ENCODE measurements at regions of chr20 and their contacts with region 1.

Region 1: GRCh38 chr20:7171911-7172310 is 404.4 kb downstream of the BMP2 start:
- DNase-seq: peak; percentile 23
- H3K4me3 Mint-ChIP-seq: no peak overlapping the region
- H3K27ac Mint-ChIP-seq: peak overlapping the region; percentile 11
- H3K4me1 Mint-ChIP-seq: peaks cover 7% of the 10 kb centered on the region
- H3K27me3 Mint-ChIP-seq: no peaks in the 10 kb centered on the region
- CTCF ChIP-seq: no peak

Region 2: GRCh38 chr20:7161690-7162089 is 10.2 kb before region 1 on chr20:
- CTCF ChIA-PET with region 1: interaction called, 18 read pairs
- POLR2A ChIA-PET with region 1: interaction called, 3 read pairs
- intact Hi-C with region 1: no loop called
- DNase-seq: peak; percentile 45
- H3K4me3 Mint-ChIP-seq: no peak overlapping the region
- H3K27ac Mint-ChIP-seq: no peak overlapping the region
- H3K4me1 Mint-ChIP-seq: peaks cover 9% of the 10 kb centered on the region
- H3K27me3 Mint-ChIP-seq: no peaks in the 10 kb centered on the region
- CTCF ChIP-seq: peak; percentile 37